ENCODE measurements at regions of chr1 and their contacts with region 1.

Region 1: DNA sequence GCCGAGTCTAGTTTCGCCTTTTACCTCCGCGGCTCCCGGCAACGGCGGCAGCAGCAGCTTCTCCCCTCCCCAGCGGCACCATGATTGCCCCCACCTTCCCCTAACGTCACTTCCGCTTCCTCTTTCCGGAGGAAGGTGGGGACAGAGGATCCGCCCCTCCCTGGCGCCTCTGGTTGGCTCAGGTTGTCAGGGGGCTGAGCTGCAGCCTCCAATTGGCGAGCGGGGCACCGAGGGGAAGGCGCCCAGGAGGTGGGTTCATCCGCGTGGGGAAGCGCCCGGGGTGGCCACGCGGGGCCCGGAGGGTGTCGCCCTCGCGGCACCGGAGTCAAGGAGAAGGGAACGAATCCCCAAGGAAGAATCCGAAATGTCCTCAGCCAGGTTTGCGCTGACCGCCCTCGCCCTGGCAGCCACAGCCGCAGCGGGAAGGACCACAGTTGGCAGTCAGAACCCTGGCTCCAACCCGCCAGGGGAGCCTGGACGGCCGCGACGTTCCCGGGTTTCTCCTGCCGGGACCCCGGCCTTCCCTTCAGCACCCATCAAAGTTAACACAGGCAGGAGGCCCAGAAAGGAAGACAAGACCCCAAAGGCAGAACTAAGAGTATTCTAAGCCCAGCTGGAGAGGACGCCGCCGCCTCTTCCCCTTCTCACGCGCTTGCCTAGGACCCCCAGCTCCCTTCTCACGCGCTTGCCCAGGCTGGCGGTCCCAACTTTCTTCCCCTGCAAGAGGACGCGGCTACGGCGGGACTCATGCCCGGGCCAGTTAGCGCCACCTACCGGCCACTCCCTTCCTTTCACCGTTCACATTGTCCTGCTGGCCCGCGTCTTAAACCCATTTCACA is at the start of gene MTF1:
- DNase-seq: peak; percentile 97
- H3K4me3 ChIP-seq: peak within 1 kb of the TSS; percentile 77 to 92
- H3K27ac ChIP-seq: peak within 1 kb of the TSS; percentile 86 to 89
- H3K4me1 ChIP-seq: peaks cover 10% of the 10 kb centered on the region
- H3K27me3 ChIP-seq: no peaks in the 10 kb centered on the region
- CTCF ChIP-seq: peak; percentile 85 to 89 (median 88)
- POLR2A ChIP-seq: peak; percentile 74
- total RNA-seq, gene MTF1: 4.5 to 8.8 TPM

Region 2: GRCh38 chr1:37676281-37677243 is 183.2 kb before region 1 on chr1:
- intact Hi-C with region 1: no loop called
- DNase-seq: peak; percentile 17
- H3K4me3 ChIP-seq: no peak overlapping the region
- H3K27ac ChIP-seq: peak overlapping the region in 1 of 2 donors; percentile 30
- H3K4me1 ChIP-seq: peaks cover 5% of the 10 kb centered on the region
- H3K27me3 ChIP-seq: peaks cover 4% of the 10 kb centered on the region
- CTCF ChIP-seq: peak in 1 of 4 experiments; percentile 3
- POLR2A ChIP-seq: no peak

Region 3: GRCh38 chr1:37692078-37692833 is 167.5 kb before region 1 on chr1 and contains the start of gene CDCA8:
- intact Hi-C with region 1: loop called (anchors 5 kb)
- DNase-seq: peak; percentile 99
- H3K4me3 ChIP-seq: peak within 1 kb of the TSS; percentile 68 to 87
- H3K27ac ChIP-seq: peak within 1 kb of the TSS; percentile 80 to 83
- H3K4me1 ChIP-seq: peaks cover 17% of the 10 kb centered on the region
- H3K27me3 ChIP-seq: no peaks in the 10 kb centered on the region
- CTCF ChIP-seq: peak; percentile 57 to 86 (median 68)
- POLR2A ChIP-seq: no peak
- total RNA-seq, gene CDCA8: 2.1 to 8.6 TPM

Region 4: GRCh38 chr1:38097284-38097898 is 237.7 kb after region 1 on chr1:
- intact Hi-C with region 1: no loop called
- DNase-seq: no peak
- H3K4me3 ChIP-seq: no peak overlapping the region
- H3K27ac ChIP-seq: no peak overlapping the region
- H3K4me1 ChIP-seq: no peaks in the 10 kb centered on the region
- H3K27me3 ChIP-seq: no peaks in the 10 kb centered on the region
- CTCF ChIP-seq: no peak
- POLR2A ChIP-seq: no peak

Measured in prostate gland (tissue), 2 donors.